Activated T-helper 1 cell treated with anti-CD3 and anti-CD28 coated beads, Interleukin-12 subunit alpha, Interleukin-12 subunit beta, Interleukin-2, Interleukin-4 antibody, amounts not matched to agents 30 ng/mL and 10 ng/mL and 1 ng/mL, durations not matched to agents 14 hours and 24 hours and 36 hours (primary cell): ENCODE measurements at regions of chr20 and their contacts with region 1.

Region 1: DNA sequence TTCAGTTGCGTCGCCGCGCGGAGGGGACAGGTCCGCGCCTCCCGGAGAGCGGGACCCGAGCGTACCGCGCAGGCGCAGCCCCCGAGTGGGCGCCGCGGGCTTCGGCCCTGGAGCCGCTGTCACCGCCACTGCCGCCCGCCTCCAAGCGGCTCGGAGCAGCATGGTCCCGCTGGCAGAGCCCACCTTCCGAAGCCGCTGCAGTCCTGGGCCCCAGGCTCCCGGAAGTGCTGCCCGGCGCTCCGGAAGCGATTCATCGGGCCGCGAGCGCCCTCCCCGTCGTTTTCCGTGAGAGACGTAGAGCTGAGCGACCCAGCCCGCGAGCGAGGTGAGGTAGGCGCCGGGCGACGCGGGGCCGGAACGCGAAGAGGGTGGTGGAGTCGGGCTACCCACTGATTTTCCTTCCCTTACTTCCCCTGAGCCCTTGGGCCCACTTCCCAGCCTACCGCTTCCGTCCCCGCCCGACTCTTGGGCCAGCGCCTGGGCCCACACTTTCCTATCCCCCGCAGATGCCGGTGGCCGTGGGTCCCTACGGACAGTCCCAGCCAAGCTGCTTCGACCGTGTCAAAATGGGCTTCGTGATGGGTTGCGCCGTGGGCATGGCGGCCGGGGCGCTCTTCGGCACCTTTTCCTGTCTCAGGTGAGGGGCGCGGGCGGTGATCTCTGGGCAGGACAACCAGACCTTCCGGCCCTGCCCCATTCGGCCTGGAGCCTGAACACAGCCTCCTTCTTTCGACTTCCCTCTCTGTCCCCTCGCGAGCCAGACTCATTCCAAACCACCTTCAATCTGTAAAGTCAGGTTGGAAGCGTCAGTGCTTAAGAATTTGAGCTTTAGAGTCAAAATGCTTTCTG is at the starts of genes NFS1 and ROMO1:
- DNase-seq: peak; percentile 80
- H3K4me3 Mint-ChIP-seq: peak within 1 kb of the TSS; percentile 92
- H3K27ac Mint-ChIP-seq: peak within 1 kb of the TSS; percentile 94
- H3K4me1 Mint-ChIP-seq: peaks cover 38% of the 10 kb centered on the region
- H3K27me3 Mint-ChIP-seq: no peaks in the 10 kb centered on the region
- total RNA-seq, gene NFS1: 35.7 and 36.2 TPM in 2 replicates
- total RNA-seq, gene ROMO1: 80.3 and 95.6 TPM in 2 replicates

Region 2: DNA sequence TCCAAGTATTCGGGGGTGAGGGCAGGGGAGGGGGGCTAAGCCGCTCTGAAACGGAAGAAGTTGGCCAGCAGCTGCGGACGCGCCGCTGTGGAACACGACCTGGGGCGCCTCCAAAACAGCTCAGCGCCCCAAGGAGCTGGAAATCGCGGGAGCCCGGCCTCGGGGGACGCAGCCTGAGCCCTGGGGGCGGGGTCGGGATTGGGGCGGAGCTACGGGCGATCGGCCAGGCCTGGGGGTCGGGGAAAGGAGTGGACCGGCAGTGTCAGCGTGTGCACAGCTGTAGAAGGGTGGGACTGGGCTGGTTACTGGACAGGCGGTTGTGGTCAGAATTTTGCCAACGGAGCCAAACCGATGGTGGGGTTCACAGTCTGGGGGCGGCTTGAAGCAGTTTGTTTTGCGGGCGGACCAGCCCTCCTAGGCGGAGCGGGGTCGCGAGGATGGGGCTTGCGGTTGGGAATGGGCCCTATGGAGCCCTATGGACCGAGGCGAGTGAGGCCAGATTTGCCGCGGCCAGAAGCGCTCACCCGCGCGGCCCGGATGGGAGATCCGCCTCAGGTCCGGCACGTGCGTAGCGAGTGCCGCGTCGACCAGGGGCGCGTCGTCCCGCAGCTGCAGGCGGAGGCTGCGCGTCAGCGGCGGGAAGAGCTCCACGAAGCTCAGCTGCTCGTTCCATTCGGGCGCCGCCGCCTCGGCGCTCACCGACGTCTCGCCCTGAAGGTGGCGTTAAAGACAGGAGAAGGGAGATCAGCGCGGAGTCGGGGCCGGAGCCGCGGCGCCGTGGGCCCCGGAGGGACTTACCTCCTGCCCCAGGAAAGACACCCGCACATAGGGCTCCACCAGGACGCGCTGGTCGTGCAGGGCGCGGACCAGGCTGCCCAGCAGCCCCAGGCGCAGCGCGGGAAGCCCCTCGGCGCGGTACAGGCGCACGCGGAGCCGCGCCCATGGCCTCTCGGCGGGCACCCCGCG is 98.1 kb before region 1 on chr20:
- intact Hi-C with region 1: loop called (anchors 1 kb)
- DNase-seq: peak; percentile 70
- H3K4me3 Mint-ChIP-seq: peak overlapping the region; percentile 72
- H3K27ac Mint-ChIP-seq: peak overlapping the region; percentile 31
- H3K4me1 Mint-ChIP-seq: no peaks in the 10 kb centered on the region
- H3K27me3 Mint-ChIP-seq: peaks cover 32% of the 10 kb centered on the region

Region 3: DNA sequence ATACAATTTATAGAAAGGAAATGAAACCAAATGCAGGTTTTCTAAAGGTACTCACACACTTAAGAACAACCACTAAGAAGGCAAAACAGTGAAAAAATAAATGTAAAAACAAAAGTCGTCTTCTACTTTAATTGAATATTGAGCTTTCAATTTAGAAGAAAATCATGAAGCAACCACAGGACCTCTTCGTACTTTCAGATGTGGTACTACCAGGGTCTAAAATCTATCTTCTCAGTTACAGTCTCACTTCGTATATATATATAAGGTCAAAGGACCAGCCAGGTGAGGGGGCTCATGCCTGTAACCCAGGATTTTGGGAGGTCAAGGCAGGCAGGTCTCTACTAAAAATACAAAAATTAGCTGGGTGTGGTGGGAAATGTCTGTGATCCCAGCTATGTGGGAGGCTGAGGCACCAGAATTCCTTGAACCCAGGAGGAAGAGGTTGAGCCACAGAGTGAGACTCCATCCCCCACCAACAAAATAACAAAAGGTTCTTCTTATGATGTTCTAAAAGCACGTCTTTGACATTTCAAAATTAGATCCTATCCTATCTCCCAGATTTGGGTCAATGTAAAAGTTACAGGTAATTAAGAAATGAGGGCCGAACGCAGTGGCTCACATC is 12.3 kb after region 1 on chr20:
- intact Hi-C with region 1: loop called (anchors 2 kb)
- DNase-seq: no peak
- H3K4me3 Mint-ChIP-seq: peak overlapping the region; percentile 42
- H3K27ac Mint-ChIP-seq: peak overlapping the region; percentile 68
- H3K4me1 Mint-ChIP-seq: peaks cover 38% of the 10 kb centered on the region
- H3K27me3 Mint-ChIP-seq: no peaks in the 10 kb centered on the region

Region 4: DNA sequence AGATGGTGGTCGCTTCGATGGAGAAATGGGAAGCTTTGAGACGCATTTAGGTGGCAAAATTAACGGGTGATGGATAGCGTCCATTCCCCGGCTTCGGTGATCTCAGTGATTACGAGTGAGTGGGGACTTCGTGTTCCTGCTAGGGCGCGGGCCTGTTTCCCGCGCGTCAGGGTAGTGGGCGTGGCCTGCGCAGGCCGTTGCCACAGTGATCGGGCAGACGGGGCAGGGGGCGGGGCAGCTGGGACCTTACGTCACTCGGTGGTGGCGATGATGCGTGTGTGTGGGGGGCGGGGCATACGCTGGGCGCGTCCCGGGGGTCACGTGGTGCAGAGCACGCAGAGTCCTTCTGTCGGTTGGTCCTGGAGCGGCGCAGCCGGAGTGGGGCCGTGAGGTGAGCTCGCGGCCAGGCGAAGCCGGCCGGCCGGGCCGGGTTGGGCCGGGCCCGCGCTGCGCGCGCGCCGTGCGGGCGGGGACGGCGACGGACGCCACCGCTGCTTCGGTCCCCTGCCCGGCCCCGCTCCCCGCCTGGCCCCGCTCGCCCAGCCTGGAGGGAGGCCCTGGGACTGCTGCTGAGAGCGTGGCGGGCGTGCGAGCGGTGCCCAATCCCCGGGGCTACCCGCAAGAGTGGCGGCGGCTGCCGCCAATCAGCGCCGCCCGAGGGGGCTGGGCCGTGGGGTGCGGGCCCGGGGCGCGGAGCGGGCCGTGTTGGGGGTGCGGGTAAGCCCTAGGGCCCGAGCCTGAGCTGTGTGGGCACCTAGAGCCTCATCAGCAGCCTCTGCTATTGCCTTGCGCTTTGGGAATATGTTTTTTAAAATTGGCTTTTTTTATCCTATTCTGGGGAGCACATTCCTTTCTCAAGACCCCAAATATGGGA is 72.6 kb after region 1 on chr20 and contains the start of gene PHF20:
- intact Hi-C with region 1: loop called (anchors 2 kb)
- DNase-seq: peak; percentile 98
- H3K4me3 Mint-ChIP-seq: peak within 1 kb of the TSS; percentile 94
- H3K27ac Mint-ChIP-seq: peak within 1 kb of the TSS; percentile 95
- H3K4me1 Mint-ChIP-seq: peaks cover 60% of the 10 kb centered on the region
- H3K27me3 Mint-ChIP-seq: no peaks in the 10 kb centered on the region
- total RNA-seq, gene PHF20: 50.5 and 61.9 TPM in 2 replicates

Region 5: DNA sequence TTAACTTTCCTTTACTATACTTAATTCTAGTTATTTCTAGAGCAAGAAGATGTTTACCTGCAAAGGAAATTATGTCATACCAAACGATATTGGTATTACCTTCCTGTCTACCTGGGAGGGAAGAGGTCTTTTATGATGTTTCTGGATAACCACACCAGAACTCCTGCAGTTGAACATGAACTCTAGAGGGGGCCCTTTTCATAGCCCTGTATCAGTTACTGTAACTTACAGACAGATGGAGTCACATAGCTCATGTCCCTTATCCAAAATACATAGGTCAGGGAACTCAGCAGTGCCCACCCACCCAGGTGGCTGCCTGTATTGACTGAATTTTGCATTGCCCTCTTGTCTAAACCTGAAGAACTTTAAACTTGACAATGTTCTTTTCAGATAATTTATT is 806.9 kb after region 1 on chr20:
- intact Hi-C with region 1: no loop called
- DNase-seq: no peak
- H3K4me3 Mint-ChIP-seq: no peak overlapping the region
- H3K27ac Mint-ChIP-seq: no peak overlapping the region
- H3K4me1 Mint-ChIP-seq: peaks cover 11% of the 10 kb centered on the region
- H3K27me3 Mint-ChIP-seq: no peaks in the 10 kb centered on the region